ENCODE measurements at regions of chr19 and their contacts with region 1.

Region 1: DNA sequence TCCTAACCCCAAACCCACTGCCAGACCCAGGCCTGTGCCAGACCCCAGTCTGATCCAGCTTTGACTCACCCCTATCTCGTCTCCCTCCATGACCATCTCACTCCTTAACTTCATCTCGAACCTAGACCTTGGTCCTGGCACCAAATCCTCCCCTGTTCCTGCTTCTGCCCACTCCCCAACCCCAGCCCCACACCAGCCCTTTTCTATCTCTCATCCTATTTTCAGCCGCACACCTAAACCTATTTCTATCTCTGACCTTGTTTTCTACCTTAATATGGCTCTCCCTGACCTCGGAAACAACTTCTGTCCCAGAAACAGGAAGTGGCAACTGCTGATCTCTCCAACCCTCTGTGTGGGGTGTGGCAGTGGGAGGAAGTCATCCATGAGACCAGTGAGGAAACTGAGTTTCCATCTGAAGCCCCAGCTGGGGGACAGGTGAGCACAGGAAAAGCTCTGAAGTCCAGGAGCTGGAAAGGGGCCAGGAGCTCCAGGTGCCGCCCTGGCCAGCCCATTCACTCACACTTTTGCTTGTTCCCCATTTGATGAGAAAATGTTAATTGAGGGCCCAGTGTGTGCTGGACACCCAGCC is 13.7 kb downstream of the PTH2 start:
- DNase-seq: peak; percentile 58
- H3K4me3 Mint-ChIP-seq: peak overlapping the region; percentile 66
- H3K27ac Mint-ChIP-seq: peak overlapping the region; percentile 91
- H3K4me1 Mint-ChIP-seq: peaks cover 55% of the 10 kb centered on the region
- H3K27me3 Mint-ChIP-seq: no peaks in the 10 kb centered on the region

Region 2: GRCh38 chr19:49421039-49421877 is 11.7 kb after region 1 on chr19:
- CTCF ChIA-PET with region 1: interaction called, 11 read pairs
- POLR2A ChIA-PET with region 1: interaction called, 18 read pairs
- DNase-seq: peak; percentile 62
- H3K4me3 Mint-ChIP-seq: peak overlapping the region; percentile 41
- H3K27ac Mint-ChIP-seq: no peak overlapping the region
- H3K4me1 Mint-ChIP-seq: peaks cover 34% of the 10 kb centered on the region
- H3K27me3 Mint-ChIP-seq: peaks cover 87% of the 10 kb centered on the region

Measured in activated CD4-positive, alpha-beta memory T cell treated with anti-CD3 and anti-CD28 coated beads, Interleukin-2, amount 10 ng/mL, durations not matched to agents 7 days and 5 days (primary cell).